ENCODE measurements at regions of chr3 and their contacts with region 1.

Region 1: GRCh38 chr3:17841190-17841828 is 98.9 kb upstream of the TBC1D5 start:
- DNase-seq: peak; percentile 87
- ATAC-seq: peak; percentile 87

Region 2: DNA sequence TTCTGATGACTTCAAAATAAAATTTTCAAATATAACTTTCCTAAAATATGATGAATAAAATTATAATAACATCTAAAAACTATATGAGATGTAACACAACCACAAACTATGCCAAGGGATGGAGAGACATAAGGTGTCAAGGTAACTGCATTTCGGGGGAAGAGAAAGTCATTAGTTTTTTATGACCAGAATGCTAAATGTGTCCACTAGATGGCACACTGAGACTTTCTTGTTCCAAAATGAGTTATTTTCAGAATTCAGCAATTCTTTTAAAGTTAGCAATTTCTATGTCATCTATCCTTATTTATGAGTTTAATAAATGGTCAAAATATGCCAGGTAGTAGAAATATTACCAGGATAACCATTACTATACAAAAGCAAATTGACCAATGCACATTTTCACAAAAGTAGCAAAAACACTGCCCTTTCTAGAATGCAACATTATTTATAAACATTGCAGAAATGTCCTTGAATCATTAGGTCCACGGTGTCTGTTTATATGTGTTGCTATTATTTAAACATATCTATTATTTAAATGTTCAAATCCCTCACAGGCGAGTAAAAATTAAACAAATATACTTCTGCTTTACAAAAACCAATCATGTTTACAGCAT is 582.4 kb before region 1 on chr3:
- intact Hi-C with region 1: loop called (anchors 2 kb)
- DNase-seq: no peak
- ATAC-seq: no peak

Region 3: GRCh38 chr3:18134386-18135062 is 293.2 kb after region 1 on chr3:
- intact Hi-C with region 1: no loop called
- DNase-seq: no peak
- ATAC-seq: no peak

Measured in sciatic nerve (tissue), 2 donors.